Body of pancreas (tissue), 4 donors: ENCODE measurements at regions of chr2 and their contacts with region 1.

Region 1: GRCh38 chr2:26615371-26615801 is 25.8 kb downstream of the CIB4 start:
- DNase-seq: no peak
- ATAC-seq: no peak
- H3K4me3 ChIP-seq: no peak overlapping the region
- H3K27ac ChIP-seq: no peak overlapping the region
- H3K4me1 ChIP-seq: peaks cover 18% of the 10 kb centered on the region
- H3K27me3 ChIP-seq: no peaks in the 10 kb centered on the region
- CTCF ChIP-seq: peak in 1 of 7 experiments; percentile 3
- POLR2A ChIP-seq: no peak

Region 2: DNA sequence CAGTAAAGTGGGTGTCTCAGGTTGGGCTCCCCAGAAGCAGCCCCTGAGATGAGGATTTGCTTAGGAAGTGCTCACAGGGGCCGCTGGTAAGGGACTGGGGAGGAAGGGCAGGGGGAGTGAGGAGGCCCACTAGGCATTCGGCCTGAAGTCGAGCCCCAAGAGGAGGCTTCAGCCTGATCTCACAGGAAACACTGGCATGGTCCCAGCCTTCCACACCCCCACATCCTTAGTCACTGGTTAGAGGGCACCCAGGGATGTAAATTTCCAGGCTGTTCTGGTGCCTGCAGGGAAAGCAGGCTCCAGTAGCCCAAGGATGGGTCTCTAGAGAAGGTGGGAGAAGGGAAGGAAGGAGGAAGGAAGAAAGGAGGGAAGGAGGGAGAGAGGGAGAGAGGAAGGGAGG is 54.8 kb after region 1 on chr2:
- intact Hi-C with region 1: loop called (anchors 5 kb)
- DNase-seq: no peak
- ATAC-seq: no peak
- H3K4me3 ChIP-seq: no peak overlapping the region
- H3K27ac ChIP-seq: no peak overlapping the region
- H3K4me1 ChIP-seq: no peaks in the 10 kb centered on the region
- H3K27me3 ChIP-seq: no peaks in the 10 kb centered on the region
- CTCF ChIP-seq: no peak
- POLR2A ChIP-seq: no peak